Ascending aorta (tissue), 2 donors: ENCODE measurements at regions of chr14 and their contacts with region 1.

Region 1: GRCh38 chr14:100654814-100655740 is 67.9 kb upstream of the BEGAIN start:
- DNase-seq: no peak
- H3K4me3 ChIP-seq: no peak overlapping the region
- H3K27ac ChIP-seq: no peak overlapping the region
- H3K4me1 ChIP-seq: no peaks in the 10 kb centered on the region
- H3K27me3 ChIP-seq: no peaks in the 10 kb centered on the region
- CTCF ChIP-seq: peak; percentile 20 to 42 (median 34)

Region 2: DNA sequence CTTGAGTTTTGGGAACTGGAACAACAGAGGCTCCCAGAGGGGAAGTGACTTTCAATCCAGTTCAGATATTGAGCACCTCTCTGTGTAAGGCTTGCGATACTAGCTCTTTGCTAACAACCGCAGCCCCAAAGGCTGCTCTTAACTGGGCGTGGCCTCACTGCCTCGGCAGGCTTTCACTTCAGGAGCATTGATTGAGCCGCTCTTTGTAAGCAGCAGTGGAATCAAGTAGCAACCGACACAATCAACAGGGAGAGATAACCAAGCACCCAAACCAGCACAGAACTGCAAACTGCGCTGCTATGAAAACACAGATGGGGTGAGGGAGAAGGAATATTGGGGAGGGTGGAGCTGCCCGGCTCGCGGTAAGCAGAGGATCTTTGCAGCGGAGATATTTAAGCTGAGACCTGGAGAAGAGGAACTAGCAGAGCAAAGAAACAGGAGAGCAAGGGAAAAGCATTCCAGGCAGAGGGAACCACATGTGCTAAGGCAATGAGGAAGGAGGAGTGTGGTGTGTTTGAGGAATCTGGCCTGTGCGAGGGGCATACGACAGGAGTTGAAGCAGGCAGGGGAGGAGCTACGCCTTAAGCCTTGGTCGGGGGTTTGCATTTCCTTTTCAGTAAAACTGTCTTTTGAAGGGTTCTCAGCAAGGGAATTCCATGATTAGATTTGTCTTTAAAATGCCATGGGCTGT is 433.4 kb before region 1 on chr14:
- intact Hi-C with region 1: no loop called
- DNase-seq: peak in 1 of 2 donors; percentile 77
- H3K4me3 ChIP-seq: peak overlapping the region; percentile 53 to 66
- H3K27ac ChIP-seq: peak overlapping the region; percentile 38 to 39
- H3K4me1 ChIP-seq: peaks cover 0 to 17% of the 10 kb centered on the region in 2 donors
- H3K27me3 ChIP-seq: no peaks in the 10 kb centered on the region
- CTCF ChIP-seq: no peak

Region 3: DNA sequence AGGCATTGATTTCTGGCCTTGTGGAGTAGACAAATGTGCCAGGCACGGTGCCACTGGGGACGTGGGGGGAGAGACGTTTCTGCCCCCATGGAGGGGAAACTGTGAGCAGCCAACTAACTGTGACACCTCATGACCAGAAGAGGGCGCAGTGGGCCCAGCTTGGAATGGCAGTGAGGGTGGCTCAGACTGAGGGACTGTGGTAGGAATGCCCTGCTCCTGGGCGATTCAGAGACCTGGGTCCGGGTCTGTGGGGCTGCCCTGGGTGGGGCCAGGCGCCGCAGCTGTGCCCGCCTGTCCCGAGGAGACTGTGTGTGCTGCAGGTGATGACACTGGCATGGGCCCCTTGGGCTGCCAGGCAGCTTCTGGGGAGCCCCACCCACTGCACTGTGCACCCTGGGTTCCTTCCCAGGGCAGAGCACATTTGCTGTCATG is 271.3 kb before region 1 on chr14:
- intact Hi-C with region 1: loop called (anchors 5 kb)
- DNase-seq: peak in 1 of 2 donors; percentile 72
- H3K4me3 ChIP-seq: no peak overlapping the region
- H3K27ac ChIP-seq: no peak overlapping the region
- H3K4me1 ChIP-seq: no peaks in the 10 kb centered on the region
- H3K27me3 ChIP-seq: no peaks in the 10 kb centered on the region
- CTCF ChIP-seq: peak; percentile 41 to 72 (median 49)

Region 4: DNA sequence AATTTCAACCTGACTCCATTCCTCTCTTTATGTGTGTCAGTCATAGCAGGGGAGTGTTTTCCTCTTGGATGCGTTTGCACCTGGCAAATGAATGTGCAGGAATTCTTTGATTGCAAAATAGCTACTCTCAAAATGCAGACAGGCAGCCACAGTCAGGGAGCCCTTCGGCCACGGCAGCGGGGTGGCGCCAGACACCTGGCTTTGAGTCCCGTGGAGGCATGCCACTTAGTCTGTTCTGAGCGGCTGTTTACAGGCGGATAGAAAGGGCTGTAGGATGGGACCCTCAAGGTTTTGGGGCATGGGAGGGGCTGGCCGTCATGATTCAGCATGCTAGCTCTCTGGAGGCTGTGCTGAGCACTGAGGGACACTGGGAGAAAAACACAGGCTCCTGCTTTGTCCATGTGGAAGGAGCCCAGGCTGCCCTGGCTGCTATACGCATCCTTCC is 214.9 kb before region 1 on chr14:
- intact Hi-C with region 1: loop called (anchors 10 kb)
- DNase-seq: no peak
- H3K4me3 ChIP-seq: peak overlapping the region in 1 of 2 donors; percentile 0
- H3K27ac ChIP-seq: no peak overlapping the region
- H3K4me1 ChIP-seq: peaks cover 0 to 12% of the 10 kb centered on the region in 2 donors
- H3K27me3 ChIP-seq: no peaks in the 10 kb centered on the region
- CTCF ChIP-seq: peak; percentile 24 to 60 (median 38)

Region 5: GRCh38 chr14:100755649-100756048 is 100.6 kb after region 1 on chr14:
- intact Hi-C with region 1: no loop called
- DNase-seq: no peak
- H3K4me3 ChIP-seq: no peak overlapping the region
- H3K27ac ChIP-seq: no peak overlapping the region
- H3K4me1 ChIP-seq: no peaks in the 10 kb centered on the region
- H3K27me3 ChIP-seq: no peaks in the 10 kb centered on the region
- CTCF ChIP-seq: no peak